IMR-90 (cell line): ENCODE measurements at regions of chr12 and their contacts with region 1.

Region 1: GRCh38 chr12:12975322-12976077 is 23.5 kb upstream of the GPRC5D start:
- DNase-seq: peak; percentile 59
- ATAC-seq: no peak
- H3K4me3 ChIP-seq: no peak overlapping the region
- H3K27ac ChIP-seq: peak overlapping the region; percentile 43
- H3K4me1 ChIP-seq: peaks cover 23% of the 10 kb centered on the region
- H3K27me3 ChIP-seq: no peaks in the 10 kb centered on the region
- CTCF ChIP-seq: peak; percentile 51
- POLR2A ChIP-seq: no peak
- RAD21 ChIP-seq: peak; percentile 57

Region 2: DNA sequence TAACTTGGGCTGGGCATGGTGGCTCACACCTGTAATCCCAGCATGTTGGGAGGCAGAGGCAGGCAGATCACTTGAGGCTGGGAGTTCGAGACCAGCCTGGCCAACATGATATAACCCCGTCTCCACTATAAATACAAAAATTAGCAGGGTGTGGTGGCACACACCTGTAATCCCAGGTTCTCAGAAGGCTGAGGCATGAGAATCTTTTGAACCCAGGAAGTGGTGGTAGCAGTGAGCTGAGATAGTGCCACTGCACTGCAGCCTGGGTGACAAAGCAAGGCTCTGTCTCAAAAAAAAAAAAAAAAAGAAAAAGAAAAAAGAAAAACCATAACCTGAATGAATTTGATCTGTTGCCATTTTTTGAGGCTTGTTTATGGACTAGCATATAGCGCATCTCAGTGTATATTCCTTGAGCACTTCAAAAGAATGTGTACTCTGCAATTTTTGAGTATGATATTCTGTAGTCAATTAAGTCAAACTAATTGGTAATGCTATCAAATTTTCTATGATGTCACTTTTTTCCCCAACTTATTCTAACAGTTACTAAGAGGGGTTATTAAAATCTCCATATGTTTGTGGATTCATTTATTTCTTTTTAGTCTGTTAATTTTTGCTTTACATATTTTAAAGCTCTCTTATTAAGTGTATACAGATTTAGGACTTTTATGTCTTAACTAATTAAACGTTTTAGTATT is 128.6 kb before region 1 on chr12:
- CTCF ChIA-PET with region 1: no interaction called
- POLR2A ChIA-PET with region 1: no interaction called
- dilution Hi-C with region 1: no loop called
- in situ Hi-C with region 1: no loop called
- intact Hi-C with region 1: no loop called
- DNase-seq: no peak
- ATAC-seq: no peak
- H3K4me3 ChIP-seq: no peak overlapping the region
- H3K27ac ChIP-seq: no peak overlapping the region
- H3K4me1 ChIP-seq: no peaks in the 10 kb centered on the region
- H3K27me3 ChIP-seq: no peaks in the 10 kb centered on the region
- CTCF ChIP-seq: no peak
- POLR2A ChIP-seq: no peak
- RAD21 ChIP-seq: no peak

Region 3: GRCh38 chr12:12943586-12944260 is 31.8 kb before region 1 on chr12:
- CTCF ChIA-PET with region 1: no interaction called
- POLR2A ChIA-PET with region 1: no interaction called
- dilution Hi-C with region 1: no loop called
- in situ Hi-C with region 1: no loop called
- intact Hi-C with region 1: loop called (anchors 5 kb)
- DNase-seq: peak; percentile 52
- ATAC-seq: peak; percentile 45
- H3K4me3 ChIP-seq: no peak overlapping the region
- H3K27ac ChIP-seq: no peak overlapping the region
- H3K4me1 ChIP-seq: peaks cover 2% of the 10 kb centered on the region; the same call in 1 of the 2 replicates
- H3K27me3 ChIP-seq: no peaks in the 10 kb centered on the region
- CTCF ChIP-seq: no peak
- POLR2A ChIP-seq: no peak
- RAD21 ChIP-seq: no peak